Activated CD4-positive, alpha-beta T cell treated with anti-CD3 and anti-CD28 coated beads for 36 hours (primary cell): ENCODE measurements at regions of chr3 and their contacts with region 1.

Region 1: DNA sequence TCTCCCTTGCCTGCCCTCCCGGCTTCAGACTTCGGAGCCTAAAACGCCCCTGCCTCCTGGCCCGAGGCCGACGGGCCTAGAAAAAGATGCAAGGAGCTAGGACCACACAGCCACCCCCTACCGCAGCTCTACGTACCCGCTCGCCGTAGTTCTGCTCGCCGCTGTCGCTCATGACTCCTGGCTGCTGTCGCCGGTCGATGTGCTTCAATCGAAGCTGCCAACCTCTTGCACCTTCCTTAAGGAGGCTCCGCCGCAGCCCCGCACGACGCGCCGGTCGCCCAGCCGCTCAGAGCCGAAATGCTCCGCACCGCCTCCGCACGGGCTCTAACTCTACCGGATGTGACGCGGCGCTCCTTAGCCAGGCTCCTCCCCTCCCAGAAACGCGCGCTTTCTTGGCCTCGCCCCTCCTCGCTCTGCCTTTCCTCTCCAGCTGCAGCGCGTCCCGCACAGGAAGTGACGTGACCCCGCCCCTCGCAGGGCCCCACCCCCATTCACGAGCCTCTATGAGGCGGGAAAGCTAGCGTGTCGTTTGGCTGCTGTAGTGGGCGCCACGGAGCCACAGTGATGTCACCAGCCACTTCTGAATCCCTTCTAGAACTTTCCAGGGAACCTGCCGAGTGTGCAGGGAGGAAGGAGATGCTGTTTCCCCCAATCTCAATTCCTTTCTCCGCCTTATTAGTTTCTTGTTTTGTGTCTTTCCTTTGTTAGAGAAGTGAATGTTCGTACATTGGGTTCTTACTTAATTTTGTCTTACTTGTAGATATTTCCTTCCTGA is at the start of gene TRA2B:
- DNase-seq: peak; percentile 100
- ATAC-seq: peak; percentile 90
- H3K4me3 Mint-ChIP-seq: peak within 1 kb of the TSS; percentile 97
- H3K27ac Mint-ChIP-seq: peak within 1 kb of the TSS; percentile 100
- H3K4me1 Mint-ChIP-seq: peaks cover 23% of the 10 kb centered on the region
- H3K27me3 Mint-ChIP-seq: no peaks in the 10 kb centered on the region
- total RNA-seq, gene TRA2B: 228 to 344 TPM

Region 2: GRCh38 chr3:185282696-185283394 is 655.0 kb before region 1 on chr3:
- CTCF ChIA-PET with region 1: no interaction called
- POLR2A ChIA-PET with region 1: no interaction called
- intact Hi-C with region 1: loop called in 1 of 2 experiments (anchors 5 kb)
- DNase-seq: peak; percentile 98
- ATAC-seq: peak; percentile 100
- H3K4me3 Mint-ChIP-seq: peak overlapping the region; percentile 97
- H3K27ac Mint-ChIP-seq: peak overlapping the region; percentile 92
- H3K4me1 Mint-ChIP-seq: peaks cover 19% of the 10 kb centered on the region
- H3K27me3 Mint-ChIP-seq: peaks cover 7% of the 10 kb centered on the region

Region 3: DNA sequence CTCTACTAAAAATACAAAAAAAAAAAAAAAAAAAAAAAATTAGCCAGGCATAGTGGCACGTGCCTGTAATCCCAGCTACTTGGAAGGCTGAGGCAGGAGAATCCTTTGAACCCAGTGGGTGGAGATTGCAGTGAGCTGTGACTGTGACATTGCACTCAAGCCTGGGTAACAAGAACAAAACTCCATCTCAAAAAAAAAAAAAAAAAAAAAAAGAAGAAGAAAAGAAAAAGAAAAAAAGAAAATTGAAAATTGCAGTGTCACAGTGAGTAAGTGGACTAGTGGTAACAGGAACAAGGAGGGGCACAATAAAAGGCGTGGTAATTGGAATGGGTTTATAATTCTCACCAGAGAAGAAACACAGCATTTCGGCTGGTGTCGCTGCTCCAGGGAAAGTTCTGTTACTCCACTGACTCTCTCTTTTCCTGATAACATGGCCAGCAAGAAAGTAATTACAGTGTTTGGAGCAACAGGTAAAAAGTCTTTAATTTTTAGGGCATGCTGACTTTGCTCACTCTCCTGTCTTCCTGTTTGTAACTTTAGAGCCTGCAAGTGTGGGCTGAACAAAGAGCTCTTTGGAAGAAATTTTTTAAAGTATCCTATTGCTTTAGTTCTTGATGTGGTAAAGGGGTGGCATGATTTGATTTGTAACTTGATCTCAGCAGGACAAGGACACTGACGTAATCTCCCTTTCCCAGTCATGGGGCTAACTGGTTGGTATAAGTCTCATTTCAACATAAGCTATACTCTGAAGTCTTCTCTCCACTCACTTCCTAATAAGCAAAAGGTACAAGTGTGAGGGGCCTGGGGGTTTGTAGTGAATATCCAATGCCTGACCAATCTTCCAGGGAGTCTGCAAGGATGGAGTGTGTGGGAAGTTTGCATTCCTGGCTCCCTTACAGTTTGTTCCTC is 22.0 kb after region 1 on chr3:
- CTCF ChIA-PET with region 1: interaction called, 129 read pairs
- POLR2A ChIA-PET with region 1: no interaction called
- intact Hi-C with region 1: loop called in 1 of 2 experiments (anchors 1 kb)
- DNase-seq: no peak
- ATAC-seq: peak; percentile 61
- H3K4me3 Mint-ChIP-seq: no peak overlapping the region
- H3K27ac Mint-ChIP-seq: no peak overlapping the region
- H3K4me1 Mint-ChIP-seq: peaks cover 1% of the 10 kb centered on the region
- H3K27me3 Mint-ChIP-seq: no peaks in the 10 kb centered on the region

Region 4: GRCh38 chr3:186570096-186570940 is 632.4 kb after region 1 on chr3 and contains the start of gene DNAJB11:
- CTCF ChIA-PET with region 1: interaction called, 9 read pairs
- POLR2A ChIA-PET with region 1: interaction called, 5 read pairs
- intact Hi-C with region 1: loop called (anchors 1 to 2 kb)
- DNase-seq: peak; percentile 100
- ATAC-seq: peak; percentile 92
- H3K4me3 Mint-ChIP-seq: peak within 1 kb of the TSS; percentile 93
- H3K27ac Mint-ChIP-seq: peak within 1 kb of the TSS; percentile 95
- H3K4me1 Mint-ChIP-seq: peaks cover 50% of the 10 kb centered on the region
- H3K27me3 Mint-ChIP-seq: no peaks in the 10 kb centered on the region
- total RNA-seq, gene DNAJB11: 30.9 to 36.6 TPM

Region 5: DNA sequence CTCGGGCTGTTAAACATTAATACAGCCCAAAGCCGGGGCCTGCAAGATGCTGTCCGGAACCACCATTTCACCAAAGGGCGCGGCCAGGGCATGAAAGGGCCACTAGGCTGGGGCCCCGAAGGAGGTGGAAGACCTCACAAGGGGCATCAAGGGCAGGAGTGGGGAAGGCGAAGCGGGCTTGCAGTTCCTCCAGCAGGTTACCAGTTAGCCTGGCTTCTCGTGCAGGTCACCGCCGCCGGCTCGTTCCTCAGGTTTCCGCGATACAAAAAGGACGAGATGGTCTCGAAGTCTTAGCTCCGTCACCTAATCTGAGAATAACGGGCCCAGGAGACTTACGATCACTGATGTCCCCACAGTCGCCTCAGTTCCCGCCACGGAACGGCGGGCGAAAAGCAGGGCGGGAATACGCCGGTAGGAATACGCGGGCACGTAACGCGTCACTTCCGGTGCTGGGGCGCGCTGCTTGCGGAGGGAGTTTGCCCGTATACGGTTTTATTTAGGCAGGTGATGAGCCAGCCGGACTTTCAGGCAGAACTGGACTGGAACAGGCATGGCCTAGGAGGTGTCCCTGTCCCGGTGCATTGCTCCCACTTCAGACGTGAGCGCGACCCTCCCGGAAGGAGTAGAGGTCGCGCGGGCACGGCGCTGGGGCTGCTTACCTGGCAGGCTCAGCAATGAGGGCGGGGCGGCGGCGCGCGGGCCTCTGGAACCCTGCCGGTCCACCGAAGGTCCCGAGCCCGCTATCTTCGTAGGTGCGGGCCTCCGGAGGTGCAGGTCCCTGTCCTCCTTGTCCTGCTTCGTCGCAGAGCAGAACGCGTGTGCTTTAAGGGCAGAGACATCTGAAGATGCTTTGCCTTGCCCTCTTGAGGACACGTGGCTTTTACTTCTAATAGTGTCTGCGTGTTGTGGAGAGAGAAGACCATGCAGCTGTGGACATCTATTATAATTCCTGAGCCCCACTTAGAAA is 868.5 kb after region 1 on chr3 and contains the start of gene RFC4:
- CTCF ChIA-PET with region 1: interaction called, 5 read pairs
- POLR2A ChIA-PET with region 1: no interaction called
- intact Hi-C with region 1: loop called in 1 of 2 experiments (anchors 5 kb)
- DNase-seq: peak; percentile 93
- ATAC-seq: peak; percentile 89
- H3K4me3 Mint-ChIP-seq: peak within 1 kb of the TSS; percentile 90
- H3K27ac Mint-ChIP-seq: peak within 1 kb of the TSS; percentile 92
- H3K4me1 Mint-ChIP-seq: peaks cover 26% of the 10 kb centered on the region
- H3K27me3 Mint-ChIP-seq: no peaks in the 10 kb centered on the region
- total RNA-seq, gene RFC4: 128 to 130 TPM